Mammary epithelial cell (primary cell): ENCODE measurements at regions of chr5 and their contacts with region 1.

Region 1: GRCh38 chr5:43389679-43390329 is 22.4 kb downstream of the CCL28 start:
- DNase-seq: peak; percentile 86
- H3K4me3 ChIP-seq: no peak overlapping the region
- H3K27ac ChIP-seq: no peak overlapping the region
- H3K4me1 ChIP-seq: peaks cover 9% of the 10 kb centered on the region
- H3K27me3 ChIP-seq: no peaks in the 10 kb centered on the region
- CTCF ChIP-seq: peak; percentile 81 to 91

Region 2: DNA sequence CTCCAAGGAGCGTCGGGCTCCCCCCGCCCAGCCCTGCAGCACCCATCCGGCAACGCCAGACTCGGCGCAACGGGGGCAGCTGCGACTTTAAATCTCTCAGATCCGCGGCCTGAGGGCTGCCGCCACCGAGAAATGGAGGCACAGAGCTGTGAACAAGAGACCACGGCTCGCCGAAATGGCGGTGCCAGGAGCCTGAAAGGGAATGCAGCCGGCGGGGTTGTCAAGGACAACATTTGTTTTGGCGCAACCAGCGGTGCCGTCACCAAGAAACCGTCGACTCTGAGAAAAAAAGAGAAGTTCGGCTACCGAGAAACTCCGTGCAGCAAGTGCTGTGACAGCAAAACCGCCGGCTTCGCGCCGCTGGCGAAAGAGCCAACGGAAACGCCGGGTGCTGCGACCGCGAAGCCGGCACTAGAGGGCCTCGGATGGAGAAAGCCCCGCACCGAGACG is 347.6 kb before region 1 on chr5:
- CTCF ChIA-PET with region 1: no interaction called
- dilution Hi-C with region 1: no loop called
- in situ Hi-C with region 1: no loop called
- intact Hi-C with region 1: no loop called
- DNase-seq: peak; percentile 78
- H3K4me3 ChIP-seq: peak overlapping the region; percentile 58 to 65 (median 59)
- H3K27ac ChIP-seq: peak overlapping the region; percentile 77
- H3K4me1 ChIP-seq: peaks cover 5% of the 10 kb centered on the region
- H3K27me3 ChIP-seq: no peaks in the 10 kb centered on the region
- CTCF ChIP-seq: peak in 1 of 2 donors; percentile 36

Region 3: DNA sequence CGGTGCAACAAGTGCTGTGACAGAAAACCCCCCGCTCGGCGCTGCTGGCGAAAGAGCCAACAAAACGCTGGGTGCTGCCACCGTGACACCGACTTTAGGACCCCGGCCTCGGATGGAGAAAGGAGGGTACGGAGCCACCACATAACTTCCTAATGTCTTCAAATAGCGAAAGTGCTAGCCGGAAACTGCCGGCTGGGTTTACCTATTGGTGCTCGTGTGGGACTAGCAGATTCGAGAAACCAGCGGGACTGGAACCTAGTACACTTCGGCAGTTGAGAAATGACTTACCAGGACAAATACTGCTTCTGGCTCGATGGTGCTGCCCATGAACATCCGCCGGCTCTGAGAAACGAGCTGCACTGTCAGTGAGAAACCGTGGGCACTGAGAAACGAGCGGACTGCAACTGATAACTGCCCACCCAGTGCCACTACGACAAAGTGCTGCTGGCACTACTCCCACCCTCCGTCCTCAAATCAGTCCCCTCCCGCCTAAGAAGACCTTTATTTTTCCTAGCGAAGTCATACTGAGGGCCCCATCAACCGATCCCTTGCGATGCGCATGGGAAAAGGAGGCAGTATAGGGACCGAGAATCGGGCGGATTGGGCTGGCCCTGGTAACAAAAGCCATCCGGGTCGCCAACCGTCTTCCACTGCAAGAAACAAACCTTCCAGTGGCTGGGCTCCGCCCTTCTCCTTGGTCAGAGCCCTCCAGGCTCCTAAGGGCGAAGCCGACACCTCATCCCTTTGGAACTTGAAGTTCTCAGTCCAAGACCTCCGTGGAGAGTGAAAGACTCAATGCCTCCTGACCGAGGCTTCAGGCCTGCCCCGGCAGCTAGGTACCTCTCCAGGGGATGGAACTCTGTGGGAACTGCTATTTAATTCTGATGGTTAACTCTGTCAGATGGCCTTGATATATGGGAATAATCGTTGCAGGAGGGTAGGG is 322.7 kb before region 1 on chr5:
- CTCF ChIA-PET with region 1: no interaction called
- dilution Hi-C with region 1: no loop called
- in situ Hi-C with region 1: no loop called
- intact Hi-C with region 1: loop called (anchors 2 kb)
- DNase-seq: peak; percentile 82
- H3K4me3 ChIP-seq: peak overlapping the region; percentile 56 to 81 (median 81)
- H3K27ac ChIP-seq: peak overlapping the region; percentile 98
- H3K4me1 ChIP-seq: peaks cover 24% of the 10 kb centered on the region
- H3K27me3 ChIP-seq: no peaks in the 10 kb centered on the region
- CTCF ChIP-seq: no peak

Region 4: DNA sequence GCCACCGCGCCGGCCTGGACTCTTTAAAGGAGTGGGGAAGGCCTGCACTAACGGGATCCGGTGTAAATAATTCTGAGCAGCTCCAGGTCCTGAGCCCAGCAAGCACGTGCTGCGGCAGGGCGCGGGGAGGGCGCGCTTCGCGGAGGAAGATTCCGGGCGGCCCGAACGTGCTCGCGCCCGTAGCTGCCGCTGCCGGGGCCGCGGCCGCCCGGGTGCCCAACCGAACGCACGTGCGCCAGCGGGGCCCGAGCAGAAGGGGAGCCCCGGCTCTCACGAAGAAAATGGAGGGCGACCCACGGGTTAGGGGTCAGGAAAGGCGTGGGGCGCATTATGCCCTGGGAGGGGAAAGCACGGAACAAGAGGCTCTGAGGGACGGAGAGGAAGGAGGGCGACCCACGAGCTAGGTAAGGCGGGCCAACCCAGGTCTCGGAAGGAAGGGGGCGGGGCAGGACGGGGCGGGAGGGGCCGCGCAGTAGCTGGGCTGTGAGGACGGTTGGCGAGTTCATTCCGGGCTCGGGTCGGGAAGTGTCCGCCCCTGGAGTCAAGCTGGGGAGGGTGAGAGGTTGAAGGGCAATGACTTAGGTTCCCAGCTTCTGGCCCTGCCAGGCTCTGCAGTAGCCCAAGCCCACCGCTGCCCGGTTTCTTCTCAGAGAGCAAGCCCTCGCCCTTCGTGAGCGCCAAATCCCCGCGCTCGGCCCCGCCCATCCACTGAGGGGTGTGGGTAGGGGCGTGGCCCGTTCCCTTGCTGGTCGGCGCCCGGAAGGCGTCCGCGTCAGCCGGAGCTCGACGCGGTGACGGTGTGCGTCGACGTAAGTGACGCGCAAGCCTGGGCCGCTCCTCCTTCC is 268.9 kb before region 1 on chr5 and contains the start of gene ZNF131:
- CTCF ChIA-PET with region 1: no interaction called
- dilution Hi-C with region 1: no loop called
- in situ Hi-C with region 1: no loop called
- intact Hi-C with region 1: loop called (anchors 5 kb)
- DNase-seq: peak; percentile 96
- H3K4me3 ChIP-seq: peak within 1 kb of the TSS; percentile 68 to 88 (median 87)
- H3K27ac ChIP-seq: peak within 1 kb of the TSS; percentile 94
- H3K4me1 ChIP-seq: peaks cover 21% of the 10 kb centered on the region
- H3K27me3 ChIP-seq: no peaks in the 10 kb centered on the region
- CTCF ChIP-seq: no peak
- total RNA-seq, gene ZNF131: 28.7 to 36.2 TPM

Region 5: DNA sequence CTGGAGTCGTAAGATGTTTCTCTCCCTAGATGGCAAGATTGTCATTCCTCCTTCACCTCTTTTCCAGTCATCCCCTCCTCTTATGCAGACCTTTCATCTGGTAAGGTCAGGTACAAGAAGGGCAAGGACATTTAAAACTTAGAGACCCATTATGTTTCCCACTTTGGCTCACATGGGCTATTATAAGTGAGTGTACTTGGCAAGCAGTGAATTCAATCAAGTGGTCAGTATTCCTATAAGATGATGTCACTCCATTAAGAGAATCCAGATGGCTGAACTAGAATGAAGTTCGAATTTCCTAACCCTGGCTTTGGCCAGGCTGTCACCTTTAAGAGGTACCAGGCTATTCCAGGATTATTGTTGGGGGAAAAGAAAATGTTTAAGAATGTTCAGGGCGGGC is 236.9 kb before region 1 on chr5:
- CTCF ChIA-PET with region 1: no interaction called
- dilution Hi-C with region 1: no loop called
- in situ Hi-C with region 1: no loop called
- intact Hi-C with region 1: no loop called
- DNase-seq: no peak
- H3K4me3 ChIP-seq: no peak overlapping the region
- H3K27ac ChIP-seq: no peak overlapping the region
- H3K4me1 ChIP-seq: no peaks in the 10 kb centered on the region
- H3K27me3 ChIP-seq: no peaks in the 10 kb centered on the region
- CTCF ChIP-seq: no peak

Region 6: GRCh38 chr5:43305948-43306565 is 83.7 kb before region 1 on chr5:
- CTCF ChIA-PET with region 1: interaction called, 4 read pairs
- dilution Hi-C with region 1: no loop called
- in situ Hi-C with region 1: loop called in 1 of 2 experiments (anchors 10 kb)
- intact Hi-C with region 1: loop called (anchors 1 kb)
- DNase-seq: no peak
- H3K4me3 ChIP-seq: no peak overlapping the region
- H3K27ac ChIP-seq: no peak overlapping the region
- H3K4me1 ChIP-seq: peaks cover 34% of the 10 kb centered on the region
- H3K27me3 ChIP-seq: no peaks in the 10 kb centered on the region
- CTCF ChIP-seq: peak; percentile 59 to 67